CD14-positive monocyte (primary cell): ENCODE measurements at regions of chr14 and their contacts with region 1.

Region 1: DNA sequence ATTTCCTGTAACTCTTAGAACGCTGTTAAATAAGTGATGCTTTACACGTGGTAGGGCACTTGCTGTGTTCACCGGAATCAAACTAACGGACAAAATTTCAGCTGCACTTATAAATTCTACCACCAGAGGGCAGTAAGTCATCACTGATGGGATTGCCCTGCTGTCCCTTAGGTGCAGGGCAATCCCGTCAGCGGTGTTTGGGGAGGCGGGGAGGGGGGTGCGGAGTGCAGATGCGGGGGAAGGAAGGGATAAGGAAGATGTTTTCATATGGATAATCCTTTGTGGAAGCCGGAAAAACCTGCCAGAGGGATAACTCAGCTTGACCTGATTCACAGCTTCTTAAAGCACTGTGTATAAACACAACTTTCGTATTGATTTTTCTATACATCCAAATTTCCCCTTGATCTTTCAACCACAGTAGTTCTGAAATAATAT is 21.7 kb upstream of the SLC10A1 start:
- DNase-seq: peak; percentile 44 to 63 (median 53)
- H3K4me3 ChIP-seq: no peak overlapping the region
- H3K4me3 Mint-ChIP-seq: no peak overlapping the region
- H3K27ac ChIP-seq: no peak overlapping the region
- H3K27ac Mint-ChIP-seq: no peak overlapping the region
- H3K4me1 ChIP-seq: no peaks in the 10 kb centered on the region
- H3K4me1 Mint-ChIP-seq: peaks cover 2% of the 10 kb centered on the region
- H3K27me3 ChIP-seq: no peaks in the 10 kb centered on the region
- H3K27me3 Mint-ChIP-seq: peaks cover 0 to 2% (median 0%) of the 10 kb centered on the region in 3 donors
- CTCF ChIP-seq: peak; percentile 84

Region 2: GRCh38 chr14:70096866-70097265 is 278.1 kb after region 1 on chr14:
- intact Hi-C with region 1: no loop called
- DNase-seq: no peak
- H3K4me3 ChIP-seq: no peak overlapping the region
- H3K4me3 Mint-ChIP-seq: no peak overlapping the region
- H3K27ac ChIP-seq: no peak overlapping the region
- H3K27ac Mint-ChIP-seq: no peak overlapping the region
- H3K4me1 ChIP-seq: peaks cover 0 to 6% of the 10 kb centered on the region in 2 donors
- H3K4me1 Mint-ChIP-seq: peaks cover 8% of the 10 kb centered on the region
- H3K27me3 ChIP-seq: no peaks in the 10 kb centered on the region
- H3K27me3 Mint-ChIP-seq: peaks cover 0 to 7% (median 0%) of the 10 kb centered on the region in 3 donors
- CTCF ChIP-seq: no peak

Region 3: DNA sequence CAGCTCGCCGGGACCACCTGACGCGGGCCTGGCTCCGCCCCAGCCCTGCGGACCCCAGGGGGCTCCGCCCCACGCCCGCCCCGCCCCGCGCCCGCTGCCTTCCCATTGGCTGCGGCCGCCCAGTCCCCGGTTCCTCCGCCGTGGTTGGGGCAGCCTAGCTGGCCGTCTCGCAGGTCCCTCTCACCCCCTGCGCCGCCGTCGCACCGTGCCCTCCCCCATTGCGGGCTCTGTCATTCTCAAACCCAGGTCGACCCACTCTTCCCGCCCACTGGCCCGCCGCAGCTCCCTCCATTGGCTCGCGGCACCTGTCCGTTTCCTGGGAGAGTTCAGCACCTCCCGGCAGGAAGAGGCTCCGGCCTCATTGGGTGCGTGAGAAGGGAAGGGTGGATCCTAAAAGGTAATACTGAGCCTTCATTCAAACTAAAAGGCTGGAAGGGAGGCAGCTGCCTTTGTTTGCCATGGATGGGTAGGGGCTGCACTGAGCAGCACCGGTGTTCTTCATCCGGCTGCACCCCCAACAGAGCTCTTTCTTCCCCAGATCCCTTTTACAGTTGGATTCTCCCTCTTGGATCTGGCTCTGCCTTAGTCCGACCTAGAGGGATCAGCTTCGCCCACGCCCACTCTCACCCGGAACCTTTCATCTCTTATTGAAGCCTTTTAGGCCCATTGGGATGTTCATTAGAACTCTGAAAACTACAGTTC is 990.9 kb after region 1 on chr14:
- intact Hi-C with region 1: loop called in 1 of 2 experiments (anchors 10 kb)
- DNase-seq: peak; percentile 44 to 53 (median 46)
- H3K4me3 ChIP-seq: peak overlapping the region; percentile 42 to 78 (median 51)
- H3K4me3 Mint-ChIP-seq: peak overlapping the region in 1 of 2 donors; percentile 84
- H3K27ac ChIP-seq: no peak overlapping the region
- H3K27ac Mint-ChIP-seq: no peak overlapping the region
- H3K4me1 ChIP-seq: peaks cover 11 to 14% of the 10 kb centered on the region in 2 donors
- H3K4me1 Mint-ChIP-seq: peaks cover 14% of the 10 kb centered on the region
- H3K27me3 ChIP-seq: peaks cover 39 to 83% of the 10 kb centered on the region in 2 donors
- H3K27me3 Mint-ChIP-seq: peaks cover 26 to 47% (median 27%) of the 10 kb centered on the region in 3 donors
- CTCF ChIP-seq: no peak